Sigmoid colon (tissue), 7 donors: ENCODE measurements at regions of chr11 and their contacts with region 1.

Region 1: GRCh38 chr11:131064373-131064991 is 148.2 kb upstream of the SNX19 start:
- DNase-seq: no peak
- H3K4me3 ChIP-seq: no peak overlapping the region
- H3K27ac ChIP-seq: no peak overlapping the region
- H3K4me1 ChIP-seq: peaks cover 0 to 8% (median 3%) of the 10 kb centered on the region in 4 donors
- H3K27me3 ChIP-seq: no peaks in the 10 kb centered on the region
- CTCF ChIP-seq: peak; percentile 64 to 88 (median 74)
- EP300 ChIP-seq: no peak
- POLR2A ChIP-seq: no peak

Region 2: DNA sequence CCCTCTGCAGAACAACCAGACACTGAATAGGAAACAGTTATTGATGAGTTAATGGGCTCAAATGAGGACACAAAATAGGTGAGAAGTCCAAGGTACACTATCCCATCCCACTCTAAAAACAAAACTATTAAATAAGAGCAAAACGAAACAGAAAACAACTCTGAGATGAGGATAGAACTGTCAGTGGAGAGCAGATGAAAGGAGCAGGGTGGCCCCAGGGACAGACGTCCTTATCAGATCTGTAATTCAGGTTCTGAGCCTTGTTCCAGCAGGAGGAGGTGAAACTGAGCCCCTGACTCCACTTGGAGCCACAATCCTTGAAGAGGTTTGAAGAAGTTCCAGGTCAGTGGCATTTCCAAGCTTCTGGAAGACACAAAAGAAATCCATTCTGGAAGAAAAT is 139.7 kb before region 1 on chr11:
- intact Hi-C with region 1: loop called (anchors 5 kb)
- DNase-seq: no peak
- H3K4me3 ChIP-seq: no peak overlapping the region
- H3K27ac ChIP-seq: no peak overlapping the region
- H3K4me1 ChIP-seq: no peaks in the 10 kb centered on the region
- H3K27me3 ChIP-seq: no peaks in the 10 kb centered on the region
- CTCF ChIP-seq: no peak
- EP300 ChIP-seq: no peak
- POLR2A ChIP-seq: no peak

Region 3: GRCh38 chr11:131217313-131218310 is 153.1 kb after region 1 on chr11:
- intact Hi-C with region 1: loop called (anchors 1 kb)
- DNase-seq: no peak
- H3K4me3 ChIP-seq: no peak overlapping the region
- H3K27ac ChIP-seq: no peak overlapping the region
- H3K4me1 ChIP-seq: no peaks in the 10 kb centered on the region
- H3K27me3 ChIP-seq: no peaks in the 10 kb centered on the region
- CTCF ChIP-seq: peak in 2 of 4 experiments; percentile 30 to 51
- EP300 ChIP-seq: no peak
- POLR2A ChIP-seq: no peak

Region 4: DNA sequence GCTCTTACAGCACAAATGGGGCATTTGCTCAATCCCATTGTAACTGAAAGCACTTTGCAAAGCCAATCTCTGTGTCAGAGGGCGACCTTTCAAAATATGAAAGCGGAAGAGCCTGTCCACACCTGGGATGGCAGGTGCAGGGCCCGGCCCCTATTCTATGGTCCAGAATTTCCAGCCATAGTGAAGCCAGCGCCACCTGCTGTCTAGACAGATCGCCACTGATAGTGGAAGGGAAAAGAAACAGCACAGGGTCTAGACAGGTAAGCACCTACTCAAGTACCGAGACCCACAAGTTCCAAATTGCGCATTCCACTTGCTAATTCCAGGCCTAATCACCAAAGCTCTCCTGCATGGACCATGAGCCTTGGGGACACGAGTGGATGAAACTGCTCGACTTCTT is 447.3 kb after region 1 on chr11:
- intact Hi-C with region 1: loop called (anchors 5 kb)
- DNase-seq: no peak
- H3K4me3 ChIP-seq: no peak overlapping the region
- H3K27ac ChIP-seq: no peak overlapping the region
- H3K4me1 ChIP-seq: no peaks in the 10 kb centered on the region
- H3K27me3 ChIP-seq: no peaks in the 10 kb centered on the region
- CTCF ChIP-seq: peak in 3 of 4 experiments; percentile 38 to 48 (median 42)
- EP300 ChIP-seq: no peak
- POLR2A ChIP-seq: no peak

Region 5: DNA sequence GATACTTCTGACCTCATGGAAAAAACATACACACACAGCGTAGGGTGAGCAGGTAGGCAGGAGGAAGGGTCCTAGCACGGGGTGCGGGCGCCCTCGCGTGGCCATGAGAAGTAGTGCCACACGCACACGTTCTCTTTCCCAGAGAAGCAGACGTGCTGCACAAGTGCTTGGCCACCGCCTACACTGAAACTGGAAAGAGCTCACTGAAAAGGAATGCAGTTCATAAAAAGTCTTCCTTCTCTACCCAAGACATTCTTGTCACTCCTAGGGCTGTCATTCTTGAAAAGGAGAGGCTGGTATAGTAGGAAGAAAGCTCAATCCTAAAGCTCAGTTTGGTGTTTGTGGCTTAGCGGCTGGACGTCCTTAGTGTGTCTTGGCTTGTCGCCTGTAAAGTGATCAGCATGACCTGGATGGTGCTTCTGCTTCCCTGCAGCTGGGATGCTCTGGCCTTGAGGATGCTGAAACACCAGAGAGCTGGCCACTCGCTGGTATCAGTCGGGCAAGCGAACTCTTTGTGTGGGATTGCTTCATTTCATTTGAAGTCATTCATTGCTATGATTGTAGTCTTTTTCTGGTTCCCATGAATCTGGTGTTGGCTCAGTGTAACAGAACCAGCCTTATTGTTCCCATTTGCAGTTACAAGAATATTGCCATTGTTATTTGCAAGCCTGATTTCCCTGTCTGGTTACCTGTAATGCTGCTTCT is 609.7 kb after region 1 on chr11:
- intact Hi-C with region 1: loop called (anchors 2 kb)
- DNase-seq: peak; percentile 84
- H3K4me3 ChIP-seq: no peak overlapping the region
- H3K27ac ChIP-seq: peak overlapping the region in 1 of 4 donors; percentile 5
- H3K4me1 ChIP-seq: peaks cover 0 to 4% (median 0%) of the 10 kb centered on the region in 4 donors
- H3K27me3 ChIP-seq: no peaks in the 10 kb centered on the region
- CTCF ChIP-seq: peak; percentile 79 to 96 (median 88)
- EP300 ChIP-seq: no peak
- POLR2A ChIP-seq: no peak